ENCODE measurements at regions of chr10 and their contacts with region 1.

Region 1: GRCh38 chr10:122112625-122113160 is 123.7 kb downstream of the TACC2 start:
- DNase-seq: peak; percentile 46 to 96
- H3K4me3 ChIP-seq: peak overlapping the region; percentile 74 to 81
- H3K27ac ChIP-seq: peak overlapping the region; percentile 97 to 99
- H3K4me1 ChIP-seq: peaks cover 0 to 19% of the 10 kb centered on the region in 2 donors
- H3K27me3 ChIP-seq: no peaks in the 10 kb centered on the region
- CTCF ChIP-seq: peak; percentile 41 to 71 (median 44)

Region 2: DNA sequence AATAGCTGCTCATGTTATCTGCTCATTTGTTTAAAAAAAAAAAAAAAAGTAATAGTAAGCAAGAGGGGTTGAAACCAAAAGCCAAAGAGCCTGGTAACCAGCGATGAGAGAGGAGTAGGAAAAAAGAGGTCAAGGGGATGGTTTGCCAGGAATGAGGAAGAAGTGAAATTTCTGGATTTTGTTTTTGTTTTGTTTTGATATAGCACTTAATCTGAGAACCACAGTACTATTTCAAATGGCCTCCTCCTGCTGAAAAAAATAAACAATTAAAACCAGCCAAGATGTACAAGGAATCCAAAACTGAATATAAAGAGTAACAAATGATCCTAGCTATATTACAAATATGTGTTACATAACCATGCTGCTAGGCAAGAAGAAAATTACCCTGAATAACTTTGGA is 727.6 kb before region 1 on chr10:
- intact Hi-C with region 1: no loop called
- DNase-seq: no peak
- H3K4me3 ChIP-seq: no peak overlapping the region
- H3K27ac ChIP-seq: no peak overlapping the region
- H3K4me1 ChIP-seq: no peaks in the 10 kb centered on the region
- H3K27me3 ChIP-seq: no peaks in the 10 kb centered on the region
- CTCF ChIP-seq: no peak

Region 3: DNA sequence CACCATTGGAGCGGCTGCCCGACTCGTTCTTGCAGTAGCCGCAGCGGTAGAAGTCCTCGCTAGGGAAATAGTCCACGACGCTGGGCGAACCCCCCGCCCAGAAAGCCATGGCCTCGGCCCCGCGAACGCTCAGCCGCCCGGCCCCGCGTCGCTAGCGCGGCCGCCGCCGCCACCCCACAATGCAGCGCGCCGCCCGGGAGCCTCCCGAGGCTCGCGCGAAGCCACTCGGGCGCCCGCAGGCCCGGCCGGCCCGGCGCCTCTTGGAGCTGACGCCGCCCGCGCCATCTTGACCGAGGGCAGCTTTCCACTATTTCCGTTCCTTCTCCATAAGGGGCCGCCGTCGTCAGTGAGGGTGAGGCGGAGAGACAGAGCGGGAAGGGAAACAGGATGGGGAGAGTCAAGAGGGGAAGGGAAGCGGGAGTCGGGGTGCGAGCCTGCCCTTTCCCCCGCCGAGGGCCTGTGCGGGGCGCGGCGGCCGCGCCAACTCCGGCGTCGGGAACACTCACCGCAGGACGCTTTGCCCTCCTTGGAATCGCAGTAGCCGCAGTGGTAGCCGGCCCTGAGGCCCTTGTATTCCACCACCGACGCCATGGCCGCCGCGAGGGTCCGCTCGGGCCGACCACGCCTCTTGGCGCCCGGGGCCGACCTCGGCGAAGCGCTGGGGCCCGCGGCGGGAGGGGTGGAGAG is 184.7 kb before region 1 on chr10 and contains the start of gene ATE1:
- intact Hi-C with region 1: loop called (anchors 1 kb)
- DNase-seq: peak; percentile 62 to 95
- H3K4me3 ChIP-seq: peak within 1 kb of the TSS; percentile 98 to 100
- H3K27ac ChIP-seq: peak within 1 kb of the TSS; percentile 97
- H3K4me1 ChIP-seq: peaks cover 0 to 10% of the 10 kb centered on the region in 2 donors
- H3K27me3 ChIP-seq: no peaks in the 10 kb centered on the region
- CTCF ChIP-seq: no peak
- total RNA-seq, gene ATE1: 6.9 TPM

Region 4: DNA sequence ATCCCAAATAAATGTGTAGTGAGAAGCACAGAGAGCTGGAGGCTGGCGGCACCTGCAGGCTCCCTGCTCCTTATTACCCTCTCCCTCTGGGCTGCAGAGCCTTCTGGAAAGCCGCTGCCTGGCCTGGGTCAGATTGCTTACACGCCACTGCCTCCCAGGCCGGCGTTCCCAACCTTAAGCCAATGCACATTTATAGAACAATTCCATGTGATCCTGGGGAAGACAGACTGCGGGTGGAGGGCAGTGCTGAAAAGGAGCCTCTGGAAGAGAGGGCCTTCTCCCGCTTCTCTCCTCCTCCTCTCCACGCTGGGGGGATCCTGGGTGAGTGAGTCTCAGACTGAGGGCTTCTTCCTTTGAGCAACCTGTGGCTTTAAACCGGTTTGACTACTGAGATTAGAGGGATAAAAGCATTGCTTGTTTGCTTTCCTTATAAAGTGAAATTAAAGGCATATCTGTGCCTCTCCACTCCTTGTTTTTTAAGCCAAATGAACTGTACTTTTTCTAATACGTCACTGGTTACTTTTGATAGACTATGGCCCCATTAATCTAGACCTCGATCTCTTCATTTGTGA is 118.2 kb before region 1 on chr10:
- intact Hi-C with region 1: loop called (anchors 5 kb)
- DNase-seq: peak in 1 of 2 donors; percentile 80
- H3K4me3 ChIP-seq: peak overlapping the region in 1 of 2 donors; percentile 55
- H3K27ac ChIP-seq: peak overlapping the region; percentile 83 to 90
- H3K4me1 ChIP-seq: peaks cover 4 to 30% of the 10 kb centered on the region in 2 donors
- H3K27me3 ChIP-seq: no peaks in the 10 kb centered on the region
- CTCF ChIP-seq: peak in 1 of 3 experiments; percentile 24

Region 5: DNA sequence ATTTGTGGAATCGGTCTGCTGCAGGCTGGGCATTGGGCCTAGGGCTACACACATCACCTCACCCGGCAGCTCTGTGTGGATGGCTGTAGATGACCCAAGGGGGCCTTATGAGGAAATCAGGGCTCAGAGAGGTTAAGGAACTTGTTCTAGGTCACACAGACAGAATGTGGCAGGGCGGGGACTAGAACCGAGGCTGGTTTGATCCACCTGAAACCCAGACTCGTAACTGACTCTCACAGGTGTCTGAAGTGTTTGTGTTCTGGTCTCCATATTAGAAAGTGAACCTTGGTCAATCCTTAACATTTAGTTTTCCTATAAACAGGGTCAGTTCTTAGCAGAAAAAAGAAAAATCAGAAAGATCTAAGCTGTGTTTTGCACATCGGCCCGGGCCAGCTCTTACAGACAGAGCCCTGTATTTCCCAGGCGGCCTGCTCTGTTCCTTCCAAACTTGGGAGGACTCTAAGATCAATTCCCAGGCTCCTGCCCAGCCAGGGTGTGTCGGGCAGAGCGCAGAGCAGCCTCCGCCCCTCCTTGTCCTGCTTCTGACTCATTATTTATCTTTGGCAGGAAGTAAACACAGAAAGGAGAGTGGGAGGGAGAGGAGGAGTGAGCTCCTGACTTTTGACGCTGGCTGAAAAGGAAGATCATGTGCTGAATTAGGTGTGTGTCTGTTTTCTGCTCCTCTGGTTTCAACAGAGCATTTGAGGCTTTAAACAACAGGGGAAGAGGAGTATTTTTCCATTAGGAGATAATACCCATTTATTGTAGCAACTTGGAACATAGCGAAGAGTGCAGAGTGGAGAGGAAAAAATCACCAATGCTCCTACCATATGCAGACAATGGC is 49.6 kb before region 1 on chr10:
- intact Hi-C with region 1: loop called (anchors 2 kb)
- DNase-seq: peak; percentile 46 to 89
- H3K4me3 ChIP-seq: no peak overlapping the region
- H3K27ac ChIP-seq: peak overlapping the region; percentile 77 to 78
- H3K4me1 ChIP-seq: peaks cover 3 to 12% of the 10 kb centered on the region in 2 donors
- H3K27me3 ChIP-seq: no peaks in the 10 kb centered on the region
- CTCF ChIP-seq: no peak

Region 6: DNA sequence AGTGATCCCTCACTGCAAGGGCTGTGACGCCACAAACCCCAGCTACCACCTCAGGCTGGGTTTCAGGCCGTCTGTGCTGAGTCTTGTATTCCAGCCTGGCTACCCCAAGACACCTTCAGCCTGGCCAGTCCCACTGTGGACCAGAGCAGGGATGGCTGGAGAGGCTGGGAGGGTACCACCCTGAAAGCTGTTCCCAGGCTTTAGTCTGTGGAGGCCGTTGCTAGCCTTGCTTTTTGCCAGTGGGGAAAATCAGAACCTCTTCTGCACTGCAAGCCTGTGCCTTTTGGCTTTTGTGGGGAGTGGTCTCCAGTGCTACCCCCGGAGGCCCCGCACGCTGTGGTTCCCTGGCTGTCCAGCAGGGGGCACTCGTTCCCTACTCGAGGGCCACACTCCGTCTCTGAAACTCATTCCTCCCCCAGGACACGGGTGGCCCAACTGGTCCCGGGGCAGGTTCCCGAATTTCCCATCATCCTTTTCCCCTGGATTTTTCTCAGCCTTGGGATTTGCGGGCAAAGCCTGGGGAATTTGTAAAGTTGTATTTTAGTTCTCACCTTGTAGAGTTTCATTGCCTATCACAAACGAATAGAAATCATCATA is 30.0 kb after region 1 on chr10:
- intact Hi-C with region 1: loop called (anchors 1 kb)
- DNase-seq: no peak
- H3K4me3 ChIP-seq: no peak overlapping the region
- H3K27ac ChIP-seq: peak overlapping the region; percentile 93 to 95
- H3K4me1 ChIP-seq: peaks cover 28 to 41% of the 10 kb centered on the region in 2 donors
- H3K27me3 ChIP-seq: no peaks in the 10 kb centered on the region
- CTCF ChIP-seq: peak; percentile 82 to 98 (median 89)

Region 7: GRCh38 chr10:122286867-122287266 is 174.2 kb after region 1 on chr10:
- intact Hi-C with region 1: loop called (anchors 5 kb)
- DNase-seq: peak; percentile 74 to 89
- H3K4me3 ChIP-seq: no peak overlapping the region
- H3K27ac ChIP-seq: peak overlapping the region; percentile 67 to 73
- H3K4me1 ChIP-seq: peaks cover 6 to 15% of the 10 kb centered on the region in 2 donors
- H3K27me3 ChIP-seq: no peaks in the 10 kb centered on the region
- CTCF ChIP-seq: no peak

Measured in ascending aorta (tissue), 2 donors.